SK-N-SH (cell line): ENCODE measurements at regions of chr3 and their contacts with region 1.

Region 1: GRCh38 chr3:187319699-187320302 is 28.3 kb upstream of the MASP1 start:
- DNase-seq: peak; percentile 29
- H3K4me3 ChIP-seq: peak overlapping the region in 1 of 2 experiments; percentile 48; a peak in 2 of 4 replicates
- H3K27ac ChIP-seq: no peak overlapping the region
- H3K4me1 ChIP-seq: no peaks in the 10 kb centered on the region; a peak in 1 of 4 replicates
- H3K27me3 ChIP-seq: peaks cover 21% of the 10 kb centered on the region; the same call in 1 of the 2 replicates
- CTCF ChIP-seq: peak; percentile 68
- EP300 ChIP-seq: no peak
- RAD21 ChIP-seq: peak; percentile 51

Region 2: DNA sequence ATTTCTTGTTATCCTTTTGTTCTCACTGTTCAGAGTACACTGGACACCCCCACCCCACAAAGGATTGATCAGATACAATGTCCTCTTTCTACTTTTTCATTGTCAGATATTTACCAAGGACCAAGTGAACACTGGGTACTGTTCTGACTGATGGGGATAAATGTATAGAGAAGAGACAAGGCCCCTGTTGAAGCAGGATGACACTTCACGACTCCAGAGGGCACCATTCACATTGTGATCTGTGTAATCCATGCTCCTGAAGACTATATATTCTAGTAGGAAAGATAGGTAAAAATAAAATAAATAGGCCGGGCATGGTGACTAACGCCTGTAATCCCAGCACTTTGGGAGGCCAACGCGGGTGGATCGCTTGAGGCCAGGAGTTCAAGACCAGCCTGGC is 768.4 kb before region 1 on chr3:
- CTCF ChIA-PET with region 1: no interaction called
- POLR2A ChIA-PET with region 1: no interaction called
- DNase-seq: no peak
- H3K4me3 ChIP-seq: no peak overlapping the region
- H3K27ac ChIP-seq: no peak overlapping the region
- H3K4me1 ChIP-seq: no peaks in the 10 kb centered on the region
- H3K27me3 ChIP-seq: no peaks in the 10 kb centered on the region
- CTCF ChIP-seq: no peak
- EP300 ChIP-seq: no peak
- RAD21 ChIP-seq: no peak; the same call in 1 of the 2 replicates

Region 3: GRCh38 chr3:186965141-186965879 is 354.5 kb before region 1 on chr3:
- CTCF ChIA-PET with region 1: no interaction called
- POLR2A ChIA-PET with region 1: no interaction called
- DNase-seq: no peak
- H3K4me3 ChIP-seq: no peak overlapping the region
- H3K27ac ChIP-seq: no peak overlapping the region
- H3K4me1 ChIP-seq: no peaks in the 10 kb centered on the region; a peak in 1 of 4 replicates
- H3K27me3 ChIP-seq: no peaks in the 10 kb centered on the region
- CTCF ChIP-seq: no peak
- EP300 ChIP-seq: no peak
- RAD21 ChIP-seq: no peak

Region 4: GRCh38 chr3:187197057-187197649 is 122.6 kb before region 1 on chr3 and contains the start of gene RTP1:
- CTCF ChIA-PET with region 1: no interaction called
- POLR2A ChIA-PET with region 1: no interaction called
- DNase-seq: peak; percentile 25
- H3K4me3 ChIP-seq: no peak within 1 kb of the TSS
- H3K27ac ChIP-seq: no peak within 1 kb of the TSS
- H3K4me1 ChIP-seq: no peaks in the 10 kb centered on the region
- H3K27me3 ChIP-seq: peaks cover 35% of the 10 kb centered on the region; the same call in 1 of the 2 replicates
- CTCF ChIP-seq: no peak
- EP300 ChIP-seq: no peak
- RAD21 ChIP-seq: no peak
- polyA plus RNA-seq, gene RTP1: not detected in 2 replicates

Region 5: DNA sequence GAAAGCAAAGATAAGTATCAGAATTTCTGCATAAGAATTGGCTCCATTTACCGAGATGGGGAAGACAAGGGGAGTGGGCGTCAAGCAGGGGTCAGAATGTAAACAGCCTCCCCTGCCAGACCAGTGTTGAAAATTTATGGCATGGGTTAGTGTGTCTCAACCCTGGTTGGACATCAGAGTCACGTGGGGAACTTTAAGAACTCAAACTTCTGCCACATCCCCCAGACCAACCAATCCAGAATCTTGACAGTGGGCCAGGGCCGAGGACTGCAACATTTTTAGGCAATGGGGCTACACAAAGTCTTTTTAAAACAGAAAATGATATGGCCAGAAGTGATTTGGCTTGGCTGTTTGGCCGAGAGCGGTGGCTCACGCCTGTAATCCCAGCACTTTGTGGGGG is 13.9 kb before region 1 on chr3:
- CTCF ChIA-PET with region 1: interaction called, 28 read pairs
- POLR2A ChIA-PET with region 1: no interaction called
- DNase-seq: no peak
- H3K4me3 ChIP-seq: no peak overlapping the region
- H3K27ac ChIP-seq: no peak overlapping the region
- H3K4me1 ChIP-seq: no peaks in the 10 kb centered on the region
- H3K27me3 ChIP-seq: no peaks in the 10 kb centered on the region
- CTCF ChIP-seq: no peak
- EP300 ChIP-seq: no peak
- RAD21 ChIP-seq: no peak

Region 6: DNA sequence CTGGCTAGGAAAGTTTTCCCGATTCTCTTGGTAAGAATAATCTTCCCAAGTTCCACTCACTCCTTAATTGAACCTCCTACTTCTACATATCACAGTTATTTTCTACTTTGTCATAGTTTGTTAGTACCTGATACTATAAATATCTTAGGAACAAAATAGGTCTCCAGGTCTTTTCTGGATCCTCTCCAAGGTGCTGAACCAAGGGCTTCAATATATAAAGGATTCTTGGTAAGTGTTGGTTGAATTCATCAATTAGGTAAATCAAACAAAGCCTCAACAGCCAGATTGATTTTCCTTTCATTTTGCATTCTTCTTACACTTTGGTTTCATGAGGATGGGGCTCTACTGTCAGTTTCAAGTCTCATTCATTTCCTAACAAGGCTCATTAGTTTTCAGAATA is 20.8 kb after region 1 on chr3:
- CTCF ChIA-PET with region 1: interaction called, 19 read pairs
- POLR2A ChIA-PET with region 1: no interaction called
- DNase-seq: no peak
- H3K4me3 ChIP-seq: no peak overlapping the region
- H3K27ac ChIP-seq: no peak overlapping the region
- H3K4me1 ChIP-seq: no peaks in the 10 kb centered on the region
- H3K27me3 ChIP-seq: peaks cover 9% of the 10 kb centered on the region; the same call in 1 of the 2 replicates
- CTCF ChIP-seq: no peak
- EP300 ChIP-seq: no peak
- RAD21 ChIP-seq: no peak

Region 7: GRCh38 chr3:187669675-187670504 is 350.1 kb after region 1 on chr3 and contains the start of gene SST:
- CTCF ChIA-PET with region 1: interaction called, 11 read pairs
- POLR2A ChIA-PET with region 1: no interaction called
- DNase-seq: no peak
- H3K4me3 ChIP-seq: no peak within 1 kb of the TSS
- H3K27ac ChIP-seq: no peak within 1 kb of the TSS
- H3K4me1 ChIP-seq: no peaks in the 10 kb centered on the region
- H3K27me3 ChIP-seq: peaks cover 17% of the 10 kb centered on the region
- CTCF ChIP-seq: no peak
- EP300 ChIP-seq: no peak
- RAD21 ChIP-seq: no peak
- polyA plus RNA-seq, gene SST: not detected in 2 replicates

Region 8: DNA sequence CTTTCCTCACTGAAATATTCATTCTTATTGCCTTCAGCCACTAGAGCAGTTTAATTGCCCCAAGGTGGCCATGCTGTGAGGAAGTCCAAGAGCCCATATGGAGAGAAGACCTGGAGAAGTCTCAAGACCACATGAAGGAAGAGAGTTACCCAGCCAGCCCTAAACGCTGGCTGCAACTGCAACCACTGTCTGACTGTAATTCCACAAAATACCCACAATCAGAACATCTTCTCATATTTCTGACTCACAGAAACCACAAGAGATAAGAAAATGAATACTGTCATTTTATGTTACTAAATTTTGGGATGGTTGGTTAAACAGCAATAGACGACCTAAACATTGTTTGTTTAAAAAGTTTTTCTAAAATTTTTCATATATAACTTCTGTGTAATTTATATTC is 365.1 kb after region 1 on chr3:
- CTCF ChIA-PET with region 1: interaction called, 192 read pairs
- POLR2A ChIA-PET with region 1: no interaction called
- DNase-seq: no peak
- H3K4me3 ChIP-seq: no peak overlapping the region
- H3K27ac ChIP-seq: no peak overlapping the region
- H3K4me1 ChIP-seq: no peaks in the 10 kb centered on the region
- H3K27me3 ChIP-seq: peaks cover 25% of the 10 kb centered on the region; the same call in 1 of the 2 replicates
- CTCF ChIP-seq: no peak
- EP300 ChIP-seq: no peak
- RAD21 ChIP-seq: no peak

Region 9: GRCh38 chr3:187714404-187714979 is 394.7 kb after region 1 on chr3:
- CTCF ChIA-PET with region 1: interaction called, 49 read pairs
- POLR2A ChIA-PET with region 1: no interaction called
- DNase-seq: peak; percentile 65
- H3K4me3 ChIP-seq: peak overlapping the region in 1 of 2 experiments; percentile 2; a peak in 1 of 4 replicates
- H3K27ac ChIP-seq: no peak overlapping the region
- H3K4me1 ChIP-seq: no peaks in the 10 kb centered on the region
- H3K27me3 ChIP-seq: no peaks in the 10 kb centered on the region; the same call in 1 of the 2 replicates
- CTCF ChIP-seq: peak; percentile 91
- EP300 ChIP-seq: no peak
- RAD21 ChIP-seq: peak; percentile 88

Region 10: GRCh38 chr3:187719628-187720336 is 400.0 kb after region 1 on chr3:
- CTCF ChIA-PET with region 1: interaction called, 49 read pairs
- POLR2A ChIA-PET with region 1: no interaction called
- DNase-seq: no peak
- H3K4me3 ChIP-seq: no peak overlapping the region
- H3K27ac ChIP-seq: no peak overlapping the region
- H3K4me1 ChIP-seq: no peaks in the 10 kb centered on the region; a peak in 1 of 4 replicates
- H3K27me3 ChIP-seq: no peaks in the 10 kb centered on the region
- CTCF ChIP-seq: no peak
- EP300 ChIP-seq: no peak
- RAD21 ChIP-seq: no peak

Region 11: GRCh38 chr3:187763850-187764648 is 444.2 kb after region 1 on chr3:
- CTCF ChIA-PET with region 1: no interaction called
- POLR2A ChIA-PET with region 1: no interaction called
- DNase-seq: no peak
- H3K4me3 ChIP-seq: no peak overlapping the region
- H3K27ac ChIP-seq: no peak overlapping the region
- H3K4me1 ChIP-seq: peaks cover 3 to 4% of the 10 kb centered on the region in 2 experiments; a peak in 2 of 4 replicates
- H3K27me3 ChIP-seq: no peaks in the 10 kb centered on the region
- CTCF ChIP-seq: no peak
- EP300 ChIP-seq: no peak
- RAD21 ChIP-seq: no peak